Common myeloid progenitor, CD34-positive (primary cell): ENCODE measurements at regions of chr1 and their contacts with region 1.

Region 1: GRCh38 chr1:27416387-27417111 is 24.1 kb downstream of the GPR3 start:
- DNase-seq: peak; percentile 84 to 93 (median 92)
- H3K4me3 ChIP-seq: no peak overlapping the region
- H3K27ac ChIP-seq: peak overlapping the region in 1 of 2 experiments; percentile 17
- H3K4me1 ChIP-seq: peaks cover 4 to 29% (median 14%) of the 10 kb centered on the region in 4 experiments
- H3K27me3 ChIP-seq: no peaks in the 10 kb centered on the region

Region 2: GRCh38 chr1:27402349-27402754 is 14.2 kb before region 1 on chr1:
- CTCF ChIA-PET with region 1: interaction called, 22 read pairs
- POLR2A ChIA-PET with region 1: no interaction called
- DNase-seq: peak in 2 of 3 donors; percentile 63 to 67
- H3K4me3 ChIP-seq: peak overlapping the region in 2 of 7 experiments; percentile 32 to 58
- H3K27ac ChIP-seq: peak overlapping the region in 1 of 2 experiments; percentile 25
- H3K4me1 ChIP-seq: peaks cover 12 to 60% (median 58%) of the 10 kb centered on the region in 4 experiments
- H3K27me3 ChIP-seq: no peaks in the 10 kb centered on the region

Region 3: GRCh38 chr1:27430903-27431600 is 14.5 kb after region 1 on chr1:
- CTCF ChIA-PET with region 1: interaction called, 119 read pairs
- POLR2A ChIA-PET with region 1: interaction called, 12 read pairs
- DNase-seq: peak; percentile 36 to 87 (median 76)
- H3K4me3 ChIP-seq: peak overlapping the region in 6 of 7 experiments; percentile 22 to 59 (median 32)
- H3K27ac ChIP-seq: peak overlapping the region; percentile 29 to 79
- H3K4me1 ChIP-seq: peaks cover 67 to 98% (median 97%) of the 10 kb centered on the region in 4 experiments
- H3K27me3 ChIP-seq: no peaks in the 10 kb centered on the region

Region 4: GRCh38 chr1:27525296-27526272 is 109.0 kb after region 1 on chr1:
- CTCF ChIA-PET with region 1: interaction called, 28 read pairs
- POLR2A ChIA-PET with region 1: no interaction called
- DNase-seq: peak; percentile 52 to 80 (median 74)
- H3K4me3 ChIP-seq: peak overlapping the region; percentile 23 to 76 (median 67)
- H3K27ac ChIP-seq: peak overlapping the region; percentile 40 to 78
- H3K4me1 ChIP-seq: peaks cover 13 to 90% (median 86%) of the 10 kb centered on the region in 4 experiments
- H3K27me3 ChIP-seq: no peaks in the 10 kb centered on the region

Region 5: DNA sequence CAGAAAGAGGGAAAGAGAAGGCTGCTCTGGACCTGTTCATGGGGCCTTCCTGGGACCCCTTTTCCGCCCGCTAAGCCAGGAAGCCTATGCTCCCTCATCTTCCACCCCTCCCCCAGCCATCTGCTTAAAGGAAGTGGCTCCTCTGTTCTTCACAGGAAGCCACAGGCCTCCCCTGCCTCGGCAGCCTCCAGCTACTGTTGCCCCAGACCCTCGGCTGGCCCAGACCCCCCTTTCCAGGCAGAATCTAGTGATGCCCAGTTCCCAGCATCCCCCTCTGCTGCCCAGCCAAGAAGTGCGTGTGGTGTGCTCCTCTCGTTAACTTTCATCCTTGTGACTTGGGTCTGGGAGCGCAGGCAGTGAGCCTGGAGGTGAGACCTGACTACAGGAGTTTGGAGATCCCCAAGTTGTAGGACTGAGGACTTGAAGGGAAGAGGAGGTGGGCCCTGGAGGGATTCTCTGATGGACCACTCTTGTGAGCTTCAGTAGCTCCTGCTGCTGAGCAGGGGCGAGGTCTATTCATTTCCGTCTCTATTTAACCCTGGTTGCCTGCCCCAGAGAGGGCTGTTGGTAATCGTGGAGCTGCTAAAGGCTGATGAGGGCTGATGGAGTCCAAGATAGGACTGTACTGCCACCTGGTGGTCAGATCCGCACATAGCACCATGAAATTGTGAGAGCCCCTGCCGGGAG is 246.3 kb after region 1 on chr1:
- CTCF ChIA-PET with region 1: interaction called, 10 read pairs
- POLR2A ChIA-PET with region 1: no interaction called
- DNase-seq: peak; percentile 88 to 93 (median 90)
- H3K4me3 ChIP-seq: peak overlapping the region in 4 of 7 experiments; percentile 33 to 52 (median 41)
- H3K27ac ChIP-seq: peak overlapping the region in 1 of 2 experiments; percentile 66
- H3K4me1 ChIP-seq: peaks cover 14 to 54% (median 30%) of the 10 kb centered on the region in 4 experiments
- H3K27me3 ChIP-seq: no peaks in the 10 kb centered on the region